ENCODE measurements at regions of chr15 and their contacts with region 1.

Region 1: DNA sequence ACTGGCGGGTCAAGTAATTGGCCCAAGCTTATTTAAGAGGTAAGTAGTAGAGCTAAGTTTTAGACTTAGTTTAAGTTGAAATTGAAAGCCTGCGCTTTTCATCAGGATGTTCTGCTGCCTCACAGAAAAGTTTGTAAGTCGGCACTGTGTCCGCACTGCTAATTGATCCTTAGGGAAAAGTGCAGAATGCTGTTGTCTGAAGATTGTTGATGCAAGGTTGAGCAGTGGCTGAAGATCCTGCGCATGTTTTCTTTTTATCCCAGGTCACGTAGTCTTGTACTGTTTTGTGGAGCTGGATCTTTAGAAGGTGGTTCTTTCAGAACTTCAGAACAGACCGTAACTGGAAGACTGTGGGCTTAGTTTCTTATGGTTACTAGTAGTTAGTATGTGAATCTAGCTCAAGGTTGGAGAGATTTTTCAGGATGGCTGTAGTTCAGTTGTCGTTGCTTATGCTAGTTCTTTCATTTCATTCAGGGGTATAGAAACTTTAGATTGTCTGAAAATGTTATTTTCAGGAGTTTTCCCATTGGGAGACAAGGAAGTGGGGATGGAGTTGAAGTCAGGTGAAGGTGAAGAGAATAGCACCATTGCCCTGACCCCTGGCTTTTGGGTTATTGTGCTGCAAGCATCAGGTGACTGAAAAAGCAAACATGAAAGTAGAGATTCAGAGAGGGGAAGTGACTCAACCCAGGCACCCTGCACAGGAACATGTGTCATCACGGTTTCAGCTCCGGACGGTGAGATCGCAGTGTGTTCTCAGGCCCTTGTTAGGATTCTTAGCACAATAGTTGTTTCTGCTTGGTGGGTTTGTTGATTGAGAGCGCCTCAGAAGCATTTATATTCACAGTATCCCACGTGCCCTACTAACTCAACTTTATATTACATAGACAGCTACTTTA is 32.8 kb downstream of the AKAP13 start:
- DNase-seq: peak; percentile 92
- ATAC-seq: peak; percentile 99
- H3K4me3 Mint-ChIP-seq: peak overlapping the region; percentile 21
- H3K27ac Mint-ChIP-seq: peak overlapping the region; percentile 86
- H3K4me1 Mint-ChIP-seq: peaks cover 74% of the 10 kb centered on the region
- H3K27me3 Mint-ChIP-seq: no peaks in the 10 kb centered on the region

Region 2: DNA sequence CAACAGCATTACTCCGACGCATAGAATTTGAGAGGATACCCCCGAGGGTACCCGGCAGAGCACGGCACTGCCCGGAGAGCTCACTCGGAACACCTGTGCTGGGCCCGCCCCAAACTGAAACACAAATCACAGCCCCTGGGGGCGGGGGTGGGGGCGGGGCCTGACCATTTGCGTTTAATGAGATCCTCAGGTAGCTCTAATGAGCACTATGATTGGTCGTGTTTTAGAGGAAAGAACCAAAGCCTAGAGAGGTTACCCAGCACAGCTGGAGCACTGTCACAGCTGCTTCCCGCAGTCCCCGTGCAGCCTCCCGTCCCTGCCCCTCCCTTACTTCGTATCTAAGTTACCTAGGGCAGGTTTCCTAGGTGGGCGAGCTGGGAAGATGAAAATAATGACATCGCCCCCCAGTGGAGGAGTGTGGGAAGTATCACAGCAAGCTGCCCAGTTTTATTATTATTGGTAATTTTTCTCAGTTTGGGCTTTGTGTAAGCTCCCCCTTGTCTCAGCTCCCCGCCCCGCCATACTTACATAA is 244.5 kb before region 1 on chr15:
- CTCF ChIA-PET with region 1: no interaction called
- DNase-seq: no peak
- ATAC-seq: peak; percentile 33
- H3K4me3 Mint-ChIP-seq: no peak overlapping the region
- H3K27ac Mint-ChIP-seq: no peak overlapping the region
- H3K4me1 Mint-ChIP-seq: peaks cover 4% of the 10 kb centered on the region
- H3K27me3 Mint-ChIP-seq: peaks cover 50% of the 10 kb centered on the region

Region 3: GRCh38 chr15:85306946-85307708 is 106.1 kb before region 1 on chr15:
- CTCF ChIA-PET with region 1: interaction called, 17 read pairs
- DNase-seq: no peak
- ATAC-seq: no peak
- H3K4me3 Mint-ChIP-seq: no peak overlapping the region
- H3K27ac Mint-ChIP-seq: no peak overlapping the region
- H3K4me1 Mint-ChIP-seq: peaks cover 26% of the 10 kb centered on the region
- H3K27me3 Mint-ChIP-seq: no peaks in the 10 kb centered on the region

Region 4: GRCh38 chr15:85318048-85318731 is 95.0 kb before region 1 on chr15:
- CTCF ChIA-PET with region 1: interaction called, 43 read pairs
- DNase-seq: peak; percentile 80
- ATAC-seq: peak; percentile 84
- H3K4me3 Mint-ChIP-seq: peak overlapping the region; percentile 34
- H3K27ac Mint-ChIP-seq: peak overlapping the region; percentile 87
- H3K4me1 Mint-ChIP-seq: peaks cover 53% of the 10 kb centered on the region
- H3K27me3 Mint-ChIP-seq: no peaks in the 10 kb centered on the region

Region 5: DNA sequence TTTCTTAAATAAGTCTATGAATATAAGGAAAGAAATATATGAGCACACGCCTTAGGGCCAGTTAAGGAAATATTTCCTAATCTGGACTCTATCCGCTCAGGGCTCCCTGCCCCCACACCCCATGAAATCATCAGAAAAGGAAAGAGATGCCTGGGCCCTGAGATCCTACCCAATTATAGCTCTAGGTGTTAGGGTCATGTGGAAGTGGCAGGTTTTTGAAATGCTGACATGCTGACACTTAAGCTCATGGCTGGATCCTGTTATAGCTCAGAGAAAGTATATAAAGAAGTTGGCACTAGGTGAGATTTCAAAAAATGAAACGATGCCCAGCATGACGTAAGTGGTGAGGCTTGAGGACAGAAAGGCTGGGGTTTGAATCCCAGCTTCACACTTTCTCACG is 76.3 kb before region 1 on chr15:
- CTCF ChIA-PET with region 1: interaction called, 136 read pairs
- DNase-seq: no peak
- ATAC-seq: no peak
- H3K4me3 Mint-ChIP-seq: no peak overlapping the region
- H3K27ac Mint-ChIP-seq: no peak overlapping the region
- H3K4me1 Mint-ChIP-seq: peaks cover 6% of the 10 kb centered on the region
- H3K27me3 Mint-ChIP-seq: no peaks in the 10 kb centered on the region

Region 6: DNA sequence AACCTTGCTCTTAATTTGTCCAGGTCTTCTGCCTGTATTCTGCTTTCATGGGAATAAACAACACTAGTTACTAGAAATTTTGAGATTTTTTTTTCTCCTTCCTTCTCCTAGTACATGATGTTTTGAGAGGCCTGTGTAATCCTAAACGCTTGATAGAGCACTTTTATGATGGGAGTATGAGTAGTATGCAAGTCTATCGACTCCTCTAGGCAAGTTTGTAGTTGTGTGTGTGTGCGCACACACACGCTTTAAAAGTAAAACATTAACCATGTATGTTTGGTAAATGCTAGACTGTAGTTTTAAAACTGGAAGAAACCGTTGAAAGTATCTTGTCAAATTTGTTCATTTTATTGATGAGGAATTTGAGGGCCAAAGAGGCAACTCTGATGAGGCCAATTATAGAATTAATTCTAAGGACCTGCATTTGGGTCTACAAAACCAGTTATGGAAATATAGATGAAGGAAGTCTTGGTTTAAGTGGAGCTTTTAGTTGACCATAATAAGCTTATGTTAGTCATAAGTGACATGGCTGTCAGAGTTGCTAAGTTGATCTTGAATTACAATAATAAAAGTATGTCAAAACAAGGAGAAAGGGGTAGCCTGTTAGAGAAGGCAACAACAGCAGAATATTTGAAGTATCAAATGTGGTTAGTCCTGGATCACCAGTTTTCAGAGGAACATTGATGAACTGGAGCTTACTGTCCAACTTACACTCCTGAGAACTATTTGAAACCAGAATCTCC is 14.3 kb after region 1 on chr15:
- CTCF ChIA-PET with region 1: interaction called, 10 read pairs
- DNase-seq: no peak
- ATAC-seq: no peak
- H3K4me3 Mint-ChIP-seq: no peak overlapping the region
- H3K27ac Mint-ChIP-seq: no peak overlapping the region
- H3K4me1 Mint-ChIP-seq: peaks cover 33% of the 10 kb centered on the region
- H3K27me3 Mint-ChIP-seq: no peaks in the 10 kb centered on the region

Region 7: GRCh38 chr15:85534031-85534430 is 120.8 kb after region 1 on chr15:
- CTCF ChIA-PET with region 1: no interaction called
- DNase-seq: no peak
- ATAC-seq: peak; percentile 91
- H3K4me3 Mint-ChIP-seq: no peak overlapping the region
- H3K27ac Mint-ChIP-seq: peak overlapping the region; percentile 39
- H3K4me1 Mint-ChIP-seq: peaks cover 25% of the 10 kb centered on the region
- H3K27me3 Mint-ChIP-seq: no peaks in the 10 kb centered on the region

Region 8: DNA sequence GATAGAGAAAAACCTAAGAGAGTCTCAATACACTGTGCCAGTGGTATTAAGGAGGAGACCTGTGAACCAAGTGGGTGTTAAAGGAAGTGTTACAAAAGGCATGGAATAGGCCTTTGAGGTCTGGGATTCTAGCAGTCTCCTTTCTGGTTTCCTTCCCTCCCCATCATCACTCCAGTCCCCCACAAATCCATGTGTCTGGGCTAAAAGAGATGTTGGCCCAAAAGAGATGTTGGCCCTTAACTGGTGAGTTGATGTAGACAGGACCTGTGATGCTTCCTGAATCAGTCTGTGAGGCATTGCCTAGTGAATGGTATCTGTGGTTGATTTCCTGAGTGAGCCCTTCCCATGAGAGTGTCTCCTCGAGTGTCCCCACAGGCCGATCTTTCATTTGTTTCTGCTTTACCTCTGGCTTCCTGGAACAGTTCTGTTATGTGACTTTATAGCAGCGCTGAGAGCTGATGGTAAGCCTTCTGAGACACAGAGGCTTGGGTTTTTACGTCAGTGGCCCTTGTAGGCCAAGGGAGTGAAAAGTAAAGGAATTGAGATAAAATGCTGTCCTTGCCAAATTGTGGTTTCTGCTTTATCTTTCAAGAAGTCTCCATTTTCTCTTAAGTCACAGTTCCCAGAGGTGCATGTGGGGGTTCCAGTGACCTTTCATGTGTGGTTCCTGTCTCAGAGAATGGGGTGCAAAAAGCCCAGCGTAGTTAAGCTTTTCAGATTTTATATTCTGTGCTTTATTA is 293.7 kb after region 1 on chr15:
- CTCF ChIA-PET with region 1: no interaction called
- DNase-seq: peak; percentile 63
- ATAC-seq: peak; percentile 40
- H3K4me3 Mint-ChIP-seq: peak overlapping the region; percentile 75
- H3K27ac Mint-ChIP-seq: peak overlapping the region; percentile 94
- H3K4me1 Mint-ChIP-seq: peaks cover 82% of the 10 kb centered on the region
- H3K27me3 Mint-ChIP-seq: no peaks in the 10 kb centered on the region

Measured in activated CD8-positive, alpha-beta memory T cell treated with anti-CD3 and anti-CD28 coated beads, Interleukin-2, amount 10 ng/mL, durations not matched to agents 7 days and 5 days (primary cell).